ENCODE measurements at regions of chr6 and their contacts with region 1.

Region 1: DNA sequence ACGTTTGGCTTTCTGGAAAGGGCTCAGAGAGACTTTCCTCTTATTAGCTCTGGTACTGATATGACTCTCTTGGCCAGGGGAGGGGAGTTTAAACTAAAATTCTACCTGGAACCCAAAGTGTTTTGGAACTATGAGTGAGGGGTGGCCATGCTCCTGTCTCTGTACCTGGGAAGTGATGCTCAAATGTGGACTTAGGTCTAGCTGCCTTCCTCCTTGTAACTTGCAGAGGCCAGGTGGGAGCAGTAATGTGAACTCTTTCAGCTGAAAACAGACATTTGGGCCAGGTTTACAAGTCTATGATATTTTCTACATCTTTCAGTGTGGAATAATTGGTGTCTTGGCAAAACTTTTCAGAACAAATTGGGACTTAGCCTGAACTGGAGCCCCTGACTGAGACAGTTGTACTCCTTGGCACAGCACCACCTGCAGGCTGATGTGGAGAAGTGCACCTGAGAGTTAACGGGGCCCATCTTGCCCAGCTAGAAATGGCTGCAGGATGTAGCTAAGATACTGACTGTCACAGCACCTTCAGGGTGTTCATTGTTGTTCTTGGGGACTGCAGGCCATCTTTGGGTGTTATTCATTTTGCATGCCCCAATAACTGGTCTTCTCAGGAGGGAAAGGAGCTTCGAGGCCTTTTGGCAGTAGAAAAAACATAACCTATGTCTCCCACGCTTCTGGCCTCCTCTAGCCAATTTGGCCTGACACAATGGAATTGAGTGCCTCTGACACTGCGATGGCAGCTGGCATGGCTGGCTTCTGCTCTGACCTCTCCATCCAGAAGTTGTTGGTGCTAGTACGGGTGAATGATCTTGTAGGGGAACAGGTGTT is 37.1 kb downstream of the CD109 start:
- DNase-seq: peak; percentile 34 to 80 (median 69)
- ATAC-seq: peak; percentile 98
- H3K4me3 ChIP-seq: no peak overlapping the region
- H3K4me3 Mint-ChIP-seq: no peak overlapping the region
- H3K27ac ChIP-seq: no peak overlapping the region
- H3K27ac Mint-ChIP-seq: peak overlapping the region in 3 of 9 donors; percentile 48 to 63 (median 58)
- H3K4me1 ChIP-seq: no peaks in the 10 kb centered on the region
- H3K4me1 Mint-ChIP-seq: peaks cover 0 to 21% (median 0%) of the 10 kb centered on the region in 7 donors
- H3K27me3 ChIP-seq: no peaks in the 10 kb centered on the region
- H3K27me3 Mint-ChIP-seq: peaks cover 0 to 4% (median 0%) of the 10 kb centered on the region in 5 donors

Region 2: DNA sequence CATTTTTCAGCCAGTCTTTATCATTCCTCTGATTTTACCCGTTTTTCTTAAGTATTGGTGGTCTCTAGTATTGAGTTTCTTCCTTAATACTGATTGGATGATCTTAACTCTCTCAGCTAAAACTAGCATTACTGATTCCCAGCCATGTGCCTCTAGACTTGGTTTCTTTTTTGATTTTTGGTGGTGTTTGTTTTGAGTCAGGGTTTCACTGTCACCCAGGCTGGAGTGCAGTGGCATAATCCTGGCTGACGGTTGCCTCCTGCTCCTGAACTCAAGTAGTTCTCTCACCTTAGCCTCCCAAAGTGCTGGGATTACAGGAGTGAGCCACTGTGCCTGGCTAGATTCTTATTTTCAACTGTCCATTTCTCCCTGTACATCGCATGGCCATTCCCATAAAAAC is 403.9 kb before region 1 on chr6:
- CTCF ChIA-PET with region 1: no interaction called
- POLR2A ChIA-PET with region 1: no interaction called
- intact Hi-C with region 1: no loop called
- DNase-seq: no peak
- ATAC-seq: no peak
- H3K4me3 ChIP-seq: no peak overlapping the region
- H3K4me3 Mint-ChIP-seq: no peak overlapping the region
- H3K27ac ChIP-seq: no peak overlapping the region
- H3K27ac Mint-ChIP-seq: no peak overlapping the region
- H3K4me1 ChIP-seq: no peaks in the 10 kb centered on the region
- H3K4me1 Mint-ChIP-seq: peaks cover 0 to 6% (median 0%) of the 10 kb centered on the region in 7 donors
- H3K27me3 ChIP-seq: no peaks in the 10 kb centered on the region
- H3K27me3 Mint-ChIP-seq: peaks cover 4 to 42% (median 19%) of the 10 kb centered on the region in 5 donors

Region 3: GRCh38 chr6:73515204-73515655 is 217.8 kb before region 1 on chr6:
- CTCF ChIA-PET with region 1: interaction called, 3 read pairs
- POLR2A ChIA-PET with region 1: interaction called, 3 read pairs
- intact Hi-C with region 1: loop called (anchors 1 to 10 kb)
- DNase-seq: no peak
- ATAC-seq: peak; percentile 5
- H3K4me3 ChIP-seq: no peak overlapping the region
- H3K4me3 Mint-ChIP-seq: peak overlapping the region in 8 of 10 donors; percentile 25 to 84 (median 58)
- H3K27ac ChIP-seq: peak overlapping the region; percentile 15
- H3K27ac Mint-ChIP-seq: peak overlapping the region; percentile 3 to 89 (median 66)
- H3K4me1 ChIP-seq: peaks cover 35 to 48% of the 10 kb centered on the region in 2 donors
- H3K4me1 Mint-ChIP-seq: peaks cover 17 to 59% (median 46%) of the 10 kb centered on the region in 7 donors
- H3K27me3 ChIP-seq: no peaks in the 10 kb centered on the region
- H3K27me3 Mint-ChIP-seq: peaks cover 0 to 2% (median 0%) of the 10 kb centered on the region in 5 donors

Region 4: GRCh38 chr6:73636048-73636675 is 96.9 kb before region 1 on chr6:
- CTCF ChIA-PET with region 1: no interaction called
- POLR2A ChIA-PET with region 1: no interaction called
- intact Hi-C with region 1: no loop called
- DNase-seq: no peak
- ATAC-seq: no peak
- H3K4me3 ChIP-seq: no peak overlapping the region
- H3K4me3 Mint-ChIP-seq: no peak overlapping the region
- H3K27ac ChIP-seq: no peak overlapping the region
- H3K27ac Mint-ChIP-seq: peak overlapping the region in 1 of 9 donors; percentile 63
- H3K4me1 ChIP-seq: no peaks in the 10 kb centered on the region
- H3K4me1 Mint-ChIP-seq: peaks cover 0 to 5% (median 0%) of the 10 kb centered on the region in 7 donors
- H3K27me3 ChIP-seq: no peaks in the 10 kb centered on the region
- H3K27me3 Mint-ChIP-seq: no peaks in the 10 kb centered on the region

Region 5: DNA sequence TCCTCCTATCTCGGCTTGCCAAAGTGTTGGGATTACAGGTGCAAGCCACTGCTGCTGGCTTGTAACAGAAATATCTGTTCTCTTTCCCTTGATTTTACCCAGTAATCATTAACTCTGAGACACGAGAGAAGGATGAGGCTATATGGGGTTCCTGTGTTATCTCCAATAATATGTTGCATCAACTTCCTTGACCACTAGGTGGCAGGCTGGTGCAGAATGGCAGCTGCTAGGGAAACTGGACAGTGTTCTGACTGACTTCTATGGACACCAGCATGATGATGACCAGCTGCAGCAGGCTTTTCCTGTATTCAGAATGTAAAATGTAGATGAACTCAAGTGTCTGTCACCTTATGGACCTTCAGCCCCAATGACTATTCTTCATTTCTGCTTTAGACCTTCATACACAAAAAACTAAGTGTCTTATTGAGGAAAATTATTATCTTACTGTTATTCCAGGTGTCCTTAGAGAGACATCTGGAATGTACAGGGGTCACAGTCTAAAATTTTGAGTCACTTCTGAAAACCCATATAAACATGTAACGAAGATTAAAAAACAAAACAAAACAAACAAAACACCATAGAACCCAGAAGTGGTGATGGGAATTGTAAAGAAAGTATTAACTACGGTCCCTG is 57.5 kb before region 1 on chr6:
- CTCF ChIA-PET with region 1: interaction called, 28 read pairs
- POLR2A ChIA-PET with region 1: no interaction called
- intact Hi-C with region 1: loop called (anchors 1 kb)
- DNase-seq: peak; percentile 31 to 74 (median 59)
- ATAC-seq: peak; percentile 92
- H3K4me3 ChIP-seq: no peak overlapping the region
- H3K4me3 Mint-ChIP-seq: no peak overlapping the region
- H3K27ac ChIP-seq: no peak overlapping the region
- H3K27ac Mint-ChIP-seq: no peak overlapping the region
- H3K4me1 ChIP-seq: no peaks in the 10 kb centered on the region
- H3K4me1 Mint-ChIP-seq: peaks cover 0 to 4% (median 0%) of the 10 kb centered on the region in 7 donors
- H3K27me3 ChIP-seq: no peaks in the 10 kb centered on the region
- H3K27me3 Mint-ChIP-seq: peaks cover 4 to 23% (median 21%) of the 10 kb centered on the region in 5 donors

Region 6: GRCh38 chr6:73695619-73696421 is 37.2 kb before region 1 on chr6 and contains the start of gene CD109:
- CTCF ChIA-PET with region 1: no interaction called
- POLR2A ChIA-PET with region 1: no interaction called
- intact Hi-C with region 1: loop called (anchors 1 kb)
- DNase-seq: peak; percentile 15 to 81 (median 48)
- ATAC-seq: peak; percentile 75
- H3K4me3 ChIP-seq: peak within 1 kb of the TSS; percentile 61
- H3K4me3 Mint-ChIP-seq: peak within 1 kb of the TSS; percentile 84 to 94 (median 90)
- H3K27ac ChIP-seq: peak within 1 kb of the TSS; percentile 49
- H3K27ac Mint-ChIP-seq: peak within 1 kb of the TSS; percentile 23 to 94 (median 87)
- H3K4me1 ChIP-seq: peaks cover 0 to 6% of the 10 kb centered on the region in 2 donors
- H3K4me1 Mint-ChIP-seq: peaks cover 5 to 43% (median 25%) of the 10 kb centered on the region in 7 donors
- H3K27me3 ChIP-seq: no peaks in the 10 kb centered on the region
- H3K27me3 Mint-ChIP-seq: peaks cover 0 to 33% (median 24%) of the 10 kb centered on the region in 5 donors
- total RNA-seq, gene CD109: 0.54 to 12.3 (median 1.2) TPM

Region 7: GRCh38 chr6:73790574-73790973 is 57.5 kb after region 1 on chr6:
- CTCF ChIA-PET with region 1: no interaction called
- POLR2A ChIA-PET with region 1: no interaction called
- intact Hi-C with region 1: no loop called
- DNase-seq: no peak
- ATAC-seq: no peak
- H3K4me3 ChIP-seq: no peak overlapping the region
- H3K4me3 Mint-ChIP-seq: no peak overlapping the region
- H3K27ac ChIP-seq: no peak overlapping the region
- H3K27ac Mint-ChIP-seq: no peak overlapping the region
- H3K4me1 ChIP-seq: no peaks in the 10 kb centered on the region
- H3K4me1 Mint-ChIP-seq: peaks cover 0 to 8% (median 0%) of the 10 kb centered on the region in 7 donors
- H3K27me3 ChIP-seq: no peaks in the 10 kb centered on the region
- H3K27me3 Mint-ChIP-seq: no peaks in the 10 kb centered on the region

Region 8: GRCh38 chr6:74091136-74091793 is 358.2 kb after region 1 on chr6:
- CTCF ChIA-PET with region 1: no interaction called
- POLR2A ChIA-PET with region 1: no interaction called
- intact Hi-C with region 1: loop called in 1 of 2 experiments (anchors 5 kb)
- DNase-seq: peak in 4 of 9 donors; percentile 2 to 14 (median 4)
- ATAC-seq: no peak
- H3K4me3 ChIP-seq: no peak overlapping the region
- H3K4me3 Mint-ChIP-seq: no peak overlapping the region
- H3K27ac ChIP-seq: no peak overlapping the region
- H3K27ac Mint-ChIP-seq: no peak overlapping the region
- H3K4me1 ChIP-seq: no peaks in the 10 kb centered on the region
- H3K4me1 Mint-ChIP-seq: no peaks in the 10 kb centered on the region
- H3K27me3 ChIP-seq: peaks cover 0 to 4% of the 10 kb centered on the region in 2 donors
- H3K27me3 Mint-ChIP-seq: peaks cover 0 to 10% (median 5%) of the 10 kb centered on the region in 5 donors